Body of pancreas (tissue), 4 donors: ENCODE measurements at regions of chr17 and their contacts with region 1.

Region 1: DNA sequence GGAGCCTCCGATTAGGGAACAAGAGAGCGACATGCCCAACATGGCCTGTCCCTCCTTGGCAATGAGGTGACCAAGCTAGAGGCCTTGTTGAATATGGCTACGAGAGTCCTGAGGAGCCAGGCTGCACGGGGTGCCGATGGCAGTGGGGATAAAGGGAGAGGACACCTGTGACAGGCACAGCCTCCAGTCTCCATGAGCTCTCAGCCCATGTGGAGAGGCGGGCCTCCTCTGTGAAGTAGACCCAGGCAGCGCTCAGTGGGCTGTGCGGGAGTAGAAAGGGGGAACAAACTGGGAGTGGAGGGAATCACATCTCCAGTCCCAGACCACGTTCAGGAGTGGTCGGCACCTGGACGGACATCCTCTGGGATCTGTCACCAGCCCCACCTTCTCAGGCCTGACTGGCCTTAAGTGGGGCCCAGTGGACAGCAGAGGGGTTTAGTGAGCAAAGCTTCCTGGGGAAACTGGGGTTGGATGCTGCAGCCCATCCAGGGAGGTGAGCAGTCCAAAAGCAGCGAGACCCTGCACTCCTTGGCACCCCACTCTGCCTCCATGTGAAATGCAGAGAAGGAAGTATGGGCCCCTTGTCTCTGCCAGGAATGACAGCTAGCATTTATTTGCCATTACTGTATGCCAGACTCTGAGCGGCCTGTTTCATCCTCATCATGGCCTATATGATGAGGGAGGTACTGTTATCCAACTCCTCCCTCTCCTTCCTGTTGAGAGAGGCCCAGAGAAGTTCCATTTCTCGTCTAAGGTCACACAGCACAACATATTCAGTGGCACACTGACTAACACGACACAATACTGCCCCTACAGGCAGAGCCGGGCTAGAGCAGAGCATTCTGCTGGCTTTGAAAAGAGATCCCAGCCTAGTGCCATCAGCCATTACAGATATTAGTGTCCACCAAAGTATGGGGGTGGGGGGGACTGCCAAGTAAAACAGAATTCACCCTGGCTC is 4.5 kb upstream of the TMEM92 start:
- DNase-seq: peak; percentile 61 to 75 (median 65)
- ATAC-seq: peak; percentile 51
- H3K4me3 ChIP-seq: no peak overlapping the region
- H3K27ac ChIP-seq: no peak overlapping the region
- H3K4me1 ChIP-seq: peaks cover 16% of the 10 kb centered on the region
- H3K27me3 ChIP-seq: peaks cover 0 to 12% of the 10 kb centered on the region in 2 donors
- CTCF ChIP-seq: peak; percentile 35 to 60 (median 54)
- POLR2A ChIP-seq: no peak

Region 2: GRCh38 chr17:50161023-50161910 is 108.5 kb before region 1 on chr17:
- intact Hi-C with region 1: no loop called
- DNase-seq: peak; percentile 88 to 91 (median 90)
- ATAC-seq: peak; percentile 100
- H3K4me3 ChIP-seq: peak overlapping the region in 1 of 2 donors; percentile 6
- H3K27ac ChIP-seq: no peak overlapping the region
- H3K4me1 ChIP-seq: peaks cover 14% of the 10 kb centered on the region
- H3K27me3 ChIP-seq: no peaks in the 10 kb centered on the region
- CTCF ChIP-seq: peak; percentile 86 to 98 (median 93)
- POLR2A ChIP-seq: peak in 2 of 3 donors; percentile 21 to 37

Region 3: GRCh38 chr17:50200457-50201275 is 69.1 kb before region 1 on chr17:
- intact Hi-C with region 1: loop called (anchors 5 kb)
- DNase-seq: peak; percentile 90 to 93 (median 90)
- ATAC-seq: peak; percentile 84
- H3K4me3 ChIP-seq: no peak overlapping the region
- H3K27ac ChIP-seq: peak overlapping the region; percentile 41 to 83 (median 65)
- H3K4me1 ChIP-seq: peaks cover 27% of the 10 kb centered on the region
- H3K27me3 ChIP-seq: peaks cover 0 to 12% of the 10 kb centered on the region in 2 donors
- CTCF ChIP-seq: peak; percentile 98 to 100 (median 99)
- POLR2A ChIP-seq: no peak